K562 (cell line): ENCODE measurements at regions of chr5 and their contacts with region 1.

Region 1: DNA sequence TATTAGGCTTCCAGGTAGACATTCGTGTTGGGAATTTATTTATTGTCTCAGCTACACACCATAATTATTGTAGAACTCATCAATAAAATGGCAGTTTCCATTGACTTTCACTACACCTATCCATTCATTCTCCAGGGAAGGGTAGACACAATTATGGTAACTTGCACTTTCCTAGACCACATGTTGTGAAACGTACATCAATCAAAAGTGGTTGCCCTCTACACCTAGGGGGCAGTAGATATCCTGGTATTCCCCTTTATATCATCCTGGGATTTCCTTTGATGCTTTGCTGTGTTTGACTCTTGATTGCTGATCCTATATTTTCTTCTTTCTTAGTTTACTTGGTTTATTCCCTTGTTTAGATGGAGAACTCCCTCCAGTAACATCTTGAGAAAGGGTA is 47.9 kb downstream of the ADGRV1 start:
- DNase-seq: peak; percentile 24 to 74 (median 40)
- ATAC-seq: peak; percentile 74
- H3K4me3 ChIP-seq: no peak overlapping the region
- H3K27ac ChIP-seq: peak overlapping the region; percentile 34
- H3K4me1 ChIP-seq: peaks cover 0 to 13% of the 10 kb centered on the region in 2 experiments; a peak in 2 of 5 replicates
- H3K27me3 ChIP-seq: no peaks in the 10 kb centered on the region
- CTCF ChIP-seq: peak; percentile 56 to 77 (median 70); a peak in 5 of 6 replicates
- EP300 ChIP-seq: no peak
- POLR2A ChIP-seq: no peak
- RAD21 ChIP-seq: peak; percentile 79 to 93

Region 2: GRCh38 chr5:89883967-89884366 is 722.6 kb before region 1 on chr5:
- CTCF ChIA-PET with region 1: no interaction called
- POLR2A ChIA-PET with region 1: no interaction called
- in situ Hi-C with region 1: no loop called
- intact Hi-C with region 1: no loop called
- DNase-seq: no peak
- ATAC-seq: no peak
- H3K4me3 ChIP-seq: no peak overlapping the region
- H3K27ac ChIP-seq: no peak overlapping the region
- H3K4me1 ChIP-seq: no peaks in the 10 kb centered on the region
- H3K27me3 ChIP-seq: no peaks in the 10 kb centered on the region
- CTCF ChIP-seq: no peak
- EP300 ChIP-seq: no peak
- POLR2A ChIP-seq: no peak
- RAD21 ChIP-seq: no peak

Region 3: DNA sequence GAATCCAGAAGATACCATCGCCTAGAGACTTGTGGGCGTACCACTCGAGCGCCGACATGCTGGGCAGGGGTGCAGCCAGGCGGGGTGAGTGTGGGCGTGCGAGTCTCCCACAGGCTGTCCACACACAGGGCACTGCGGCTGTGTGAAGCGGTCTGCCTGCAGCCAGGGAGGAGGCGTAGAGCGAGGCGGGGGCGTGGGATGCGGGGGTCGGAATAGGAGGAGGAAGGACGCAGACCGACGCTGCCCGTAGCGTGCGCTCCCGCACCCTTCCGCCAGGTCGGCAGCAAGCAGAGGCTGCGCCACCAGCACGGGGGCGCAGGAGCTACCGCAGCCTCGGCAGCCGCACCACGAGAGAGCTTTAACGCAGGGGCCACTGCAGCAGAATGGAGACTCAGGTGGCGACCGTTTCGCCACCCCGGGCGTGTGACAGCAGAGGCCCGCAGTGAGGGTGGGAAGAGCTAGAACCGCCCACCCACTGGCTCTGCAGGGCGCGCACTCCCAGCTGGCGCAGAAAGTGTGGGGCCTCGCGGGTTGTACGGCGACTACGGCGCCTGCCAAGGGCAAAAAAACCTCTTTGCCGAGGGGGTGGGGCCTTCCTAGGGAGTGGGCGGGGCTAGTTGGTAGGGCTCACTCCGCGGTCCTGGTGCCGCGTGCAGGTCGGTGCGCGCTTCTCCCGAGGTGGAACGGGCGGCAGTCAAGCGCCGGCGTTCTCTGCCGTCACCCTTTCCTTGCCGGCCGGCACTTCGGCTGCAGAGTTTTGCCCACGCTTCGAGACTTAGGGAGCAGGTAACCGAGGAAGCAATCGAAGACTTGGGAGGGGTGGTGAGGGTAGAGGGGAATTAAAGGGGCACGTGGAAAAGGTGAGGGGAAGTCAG is 132.1 kb before region 1 on chr5 and contains the starts of genes MBLAC2 and POLR3G:
- CTCF ChIA-PET with region 1: no interaction called
- POLR2A ChIA-PET with region 1: no interaction called
- in situ Hi-C with region 1: no loop called
- intact Hi-C with region 1: loop called (anchors 10 kb)
- DNase-seq: peak; percentile 92 to 96 (median 94)
- ATAC-seq: peak; percentile 86
- H3K4me3 ChIP-seq: peak within 1 kb of the TSS; percentile 65
- H3K27ac ChIP-seq: peak within 1 kb of the TSS; percentile 92
- H3K4me1 ChIP-seq: peaks cover 16 to 25% of the 10 kb centered on the region in 2 experiments; a peak in 4 of 5 replicates
- H3K27me3 ChIP-seq: no peaks in the 10 kb centered on the region
- CTCF ChIP-seq: peak; percentile 36 to 84 (median 52)
- EP300 ChIP-seq: no peak; the same call in 1 of the 2 replicates
- POLR2A ChIP-seq: peak; percentile 95
- RAD21 ChIP-seq: no peak
- polyA plus RNA-seq, gene MBLAC2: 2.4 to 3.2 TPM
- polyA plus RNA-seq, gene POLR3G: 95.1 to 111 TPM

Region 4: DNA sequence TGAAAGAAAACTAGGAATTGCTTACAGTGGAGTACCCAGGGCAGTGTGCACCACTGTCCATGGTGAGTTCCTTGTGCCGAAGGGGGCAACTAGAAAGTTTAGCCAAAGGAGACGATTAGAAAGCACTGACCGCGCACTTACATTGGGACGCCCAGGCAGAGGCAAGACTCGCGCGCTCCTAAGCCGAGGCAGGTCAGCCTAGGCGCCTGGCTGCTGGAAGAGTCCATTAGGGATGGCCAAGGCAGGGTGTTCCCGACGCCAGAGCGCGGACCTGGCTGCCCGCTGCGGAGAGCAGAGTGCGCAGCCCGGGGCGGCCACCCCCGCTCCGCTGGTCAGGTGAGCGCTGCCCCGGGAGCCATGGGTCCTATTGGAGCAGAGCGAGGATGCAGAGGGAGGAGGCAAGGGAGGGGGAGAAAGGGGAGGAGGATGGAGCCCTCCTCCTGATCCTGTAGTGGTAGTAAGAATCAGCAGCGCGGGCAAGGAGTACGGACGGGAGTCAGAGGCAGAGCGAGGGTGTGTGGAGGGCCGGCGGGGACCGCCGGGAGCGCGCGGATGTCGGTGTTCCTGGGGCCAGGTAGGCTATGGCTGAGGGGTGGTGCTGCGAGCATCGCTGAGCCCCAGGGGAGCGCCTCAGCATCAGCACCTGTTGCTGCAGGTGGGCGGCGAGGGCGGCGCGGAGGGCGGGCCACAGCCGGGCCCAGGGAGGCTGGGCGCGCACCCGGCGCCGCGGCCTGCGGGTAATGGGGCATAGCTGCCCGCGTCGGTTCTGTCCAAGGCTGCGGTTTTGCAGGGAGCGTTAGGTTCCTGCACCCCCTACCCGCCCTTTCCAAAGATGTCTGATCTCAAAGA is 48.0 kb before region 1 on chr5 and contains the start of gene ADGRV1:
- CTCF ChIA-PET with region 1: no interaction called
- POLR2A ChIA-PET with region 1: no interaction called
- in situ Hi-C with region 1: no loop called
- intact Hi-C with region 1: no loop called
- DNase-seq: peak; percentile 75 to 88 (median 78)
- ATAC-seq: peak; percentile 93
- H3K4me3 ChIP-seq: peak within 1 kb of the TSS; percentile 53
- H3K27ac ChIP-seq: peak within 1 kb of the TSS; percentile 43; the same call in 2 of the 3 replicates
- H3K4me1 ChIP-seq: peaks cover 4 to 10% of the 10 kb centered on the region in 2 experiments; a peak in 4 of 5 replicates
- H3K27me3 ChIP-seq: no peaks in the 10 kb centered on the region
- CTCF ChIP-seq: no peak
- EP300 ChIP-seq: no peak
- POLR2A ChIP-seq: peak; percentile 77
- RAD21 ChIP-seq: no peak
- polyA plus RNA-seq, gene ADGRV1: 21.7 to 24.5 TPM

Region 5: DNA sequence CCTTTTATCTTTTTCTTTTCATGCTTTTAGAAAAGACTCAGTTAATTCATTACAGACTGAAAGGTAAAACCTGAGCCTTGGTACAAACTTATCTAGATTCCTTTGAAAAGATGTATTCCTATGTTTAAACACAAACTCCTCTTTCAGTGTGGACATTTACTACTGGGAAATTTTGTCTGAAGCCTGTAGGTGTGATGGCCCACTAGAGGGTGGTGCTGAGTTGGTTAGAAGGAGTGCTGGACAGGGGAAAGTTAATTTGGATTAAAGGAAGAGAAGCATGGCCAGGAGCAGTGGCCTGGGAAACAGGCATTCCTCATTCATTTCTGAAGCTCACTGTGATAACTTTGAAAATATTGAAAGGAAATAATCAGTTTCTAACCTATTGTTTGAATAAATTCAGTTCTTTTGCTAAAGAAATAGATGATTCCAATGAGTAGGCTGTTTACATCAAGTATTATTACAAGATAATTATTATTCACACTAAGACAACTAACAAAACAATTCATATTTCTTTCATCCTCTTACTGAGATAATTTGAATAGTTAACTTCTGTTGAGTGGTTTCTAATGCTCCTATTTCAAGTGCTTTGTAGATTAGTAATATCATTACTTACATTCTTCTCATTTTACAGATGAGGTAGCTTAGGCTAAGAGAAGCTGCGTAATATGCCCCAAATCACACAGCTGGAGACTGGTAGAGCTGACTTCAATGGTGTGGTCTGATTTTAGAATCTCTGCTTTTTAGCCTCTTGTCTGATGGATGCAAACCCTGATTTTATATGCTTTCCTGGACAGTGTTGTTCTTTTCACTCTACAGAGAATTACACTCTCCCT is 103.0 kb after region 1 on chr5:
- CTCF ChIA-PET with region 1: interaction called, 3 read pairs
- POLR2A ChIA-PET with region 1: no interaction called
- in situ Hi-C with region 1: no loop called
- intact Hi-C with region 1: loop called (anchors 1 kb)
- DNase-seq: peak; percentile 20 to 75 (median 45)
- ATAC-seq: peak; percentile 94
- H3K4me3 ChIP-seq: no peak overlapping the region
- H3K27ac ChIP-seq: no peak overlapping the region
- H3K4me1 ChIP-seq: no peaks in the 10 kb centered on the region
- H3K27me3 ChIP-seq: no peaks in the 10 kb centered on the region
- CTCF ChIP-seq: peak; percentile 65 to 82 (median 73)
- EP300 ChIP-seq: no peak
- POLR2A ChIP-seq: no peak
- RAD21 ChIP-seq: peak; percentile 49 to 65

Region 6: DNA sequence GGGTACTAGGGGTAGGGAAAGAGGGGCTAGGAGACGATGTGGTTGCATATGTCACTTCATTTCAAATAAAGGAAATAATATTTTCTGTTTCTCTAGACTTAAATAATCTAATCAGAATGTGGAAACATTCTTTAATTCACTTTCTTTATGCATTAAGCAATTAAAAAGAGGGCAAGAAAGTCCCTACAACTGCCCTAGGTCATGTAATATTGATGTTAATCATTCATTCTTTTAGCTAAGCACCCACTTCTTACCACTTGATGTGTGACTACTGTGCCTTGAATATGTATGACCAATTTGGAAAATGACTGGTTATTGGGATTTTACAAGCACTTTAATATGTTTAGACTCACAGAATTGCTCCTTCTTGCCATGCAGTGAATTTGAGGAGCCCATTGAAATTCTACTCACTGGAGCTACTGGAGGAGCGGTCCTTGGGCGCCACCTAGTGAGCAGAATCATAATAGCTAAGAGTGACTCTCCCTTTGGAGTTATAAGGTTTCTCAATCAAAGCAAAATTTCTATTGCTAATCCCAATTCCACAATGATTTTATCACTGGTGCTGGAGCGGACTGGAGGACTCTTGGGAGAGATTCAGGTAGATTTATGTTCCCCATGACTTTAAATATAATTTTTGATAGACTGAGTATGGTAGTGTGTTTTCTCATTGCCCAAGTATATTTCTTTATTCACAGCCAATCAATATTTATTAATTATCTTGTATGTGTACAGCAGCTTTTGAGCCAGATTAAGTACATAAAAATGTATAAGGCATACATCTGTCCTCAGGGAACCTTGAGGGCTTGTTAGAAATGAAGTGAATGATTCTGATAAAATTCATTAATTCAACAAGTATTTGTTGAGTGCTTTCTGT is 177.2 kb after region 1 on chr5:
- CTCF ChIA-PET with region 1: interaction called, 3 read pairs
- POLR2A ChIA-PET with region 1: no interaction called
- in situ Hi-C with region 1: loop called (anchors 5 kb)
- intact Hi-C with region 1: loop called (anchors 1 kb)
- DNase-seq: peak; percentile 52 to 81 (median 60)
- ATAC-seq: peak; percentile 96
- H3K4me3 ChIP-seq: no peak overlapping the region
- H3K27ac ChIP-seq: no peak overlapping the region
- H3K4me1 ChIP-seq: no peaks in the 10 kb centered on the region
- H3K27me3 ChIP-seq: no peaks in the 10 kb centered on the region
- CTCF ChIP-seq: peak; percentile 73 to 95 (median 85)
- EP300 ChIP-seq: no peak
- POLR2A ChIP-seq: no peak
- RAD21 ChIP-seq: peak; percentile 77 to 84